ENCODE measurements at regions of chr15 and their contacts with region 1.

Region 1: GRCh38 chr15:40543631-40544294 is 21.1 kb downstream of the CCDC32 start:
- DNase-seq: peak; percentile 94
- ATAC-seq: peak; percentile 91
- H3K4me3 ChIP-seq: peak overlapping the region; percentile 24; the same call in 1 of the 2 replicates
- H3K27ac ChIP-seq: peak overlapping the region; percentile 73
- H3K4me1 ChIP-seq: peaks cover 57% of the 10 kb centered on the region
- H3K27me3 ChIP-seq: no peaks in the 10 kb centered on the region
- CTCF ChIP-seq: no peak
- EP300 ChIP-seq: peak; percentile 94 to 95
- POLR2A ChIP-seq: no peak
- RAD21 ChIP-seq: 0 out of 2 replicates have a peak, but pooled peaks have one; percentile 9

Region 2: DNA sequence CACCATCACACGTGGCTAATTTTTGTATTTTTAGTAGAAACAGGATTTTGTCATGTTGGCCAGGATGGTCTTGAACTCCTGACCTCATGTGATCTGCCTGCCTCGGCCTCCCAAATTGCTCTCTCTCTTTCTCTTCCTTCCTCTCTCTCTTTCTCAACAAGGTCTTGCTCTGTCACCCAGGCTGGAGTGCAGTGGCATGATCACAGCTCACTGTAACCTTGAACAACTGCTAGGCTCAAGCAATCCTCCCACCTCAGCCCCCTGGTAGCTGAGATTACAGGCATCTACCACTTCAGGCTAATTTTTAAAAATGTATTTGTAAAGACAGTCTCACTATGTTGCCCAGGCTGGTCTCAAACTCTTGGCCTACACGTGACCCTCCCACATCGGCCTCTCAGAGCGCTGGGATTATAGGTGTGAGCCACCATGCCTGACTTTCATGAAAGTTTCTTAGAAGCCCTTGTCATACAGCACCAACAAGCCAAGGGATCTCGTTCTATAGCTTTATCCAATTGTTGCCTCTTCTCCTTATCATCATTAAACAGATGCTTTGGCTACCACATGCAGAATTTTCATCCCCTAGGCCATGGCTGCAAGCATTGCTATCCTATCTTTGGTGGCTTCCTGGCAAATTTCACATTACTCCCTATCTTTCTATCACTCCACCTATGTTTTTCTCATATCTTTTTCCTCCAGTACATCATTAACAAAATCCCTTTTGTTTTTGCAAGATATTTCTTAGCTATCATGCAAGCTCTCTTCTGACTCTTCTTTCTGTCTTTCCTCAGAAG is 15.4 kb after region 1 on chr15:
- CTCF ChIA-PET with region 1: interaction called, 18 read pairs
- POLR2A ChIA-PET with region 1: interaction called, 17 read pairs
- RAD21 ChIA-PET with region 1: interaction called, 18 read pairs
- SMC1A ChIA-PET with region 1: interaction called, 24 read pairs
- in situ Hi-C with region 1: no loop called
- intact Hi-C with region 1: no loop called
- DNase-seq: no peak
- ATAC-seq: peak; percentile 17
- H3K4me3 ChIP-seq: peak overlapping the region; percentile 43; the same call in 1 of the 2 replicates
- H3K27ac ChIP-seq: peak overlapping the region; percentile 91
- H3K4me1 ChIP-seq: peaks cover 42% of the 10 kb centered on the region
- H3K27me3 ChIP-seq: no peaks in the 10 kb centered on the region
- CTCF ChIP-seq: no peak
- EP300 ChIP-seq: no peak
- POLR2A ChIP-seq: no peak
- RAD21 ChIP-seq: no peak

Measured in GM12878 (cell line).